Activated CD8-positive, alpha-beta T cell treated with anti-CD3 and anti-CD28 coated beads for 36 hours (primary cell): ENCODE measurements at regions of chr1 and their contacts with region 1.

Region 1: GRCh38 chr1:116737020-116737854 is 17.0 kb upstream of the CD2 start:
- DNase-seq: peak; percentile 86
- ATAC-seq: peak; percentile 60
- H3K4me3 Mint-ChIP-seq: peak overlapping the region; percentile 76
- H3K27ac Mint-ChIP-seq: peak overlapping the region; percentile 100
- H3K4me1 Mint-ChIP-seq: peaks cover 68% of the 10 kb centered on the region
- H3K27me3 Mint-ChIP-seq: no peaks in the 10 kb centered on the region
- CTCF ChIP-seq: peak; percentile 91

Region 2: DNA sequence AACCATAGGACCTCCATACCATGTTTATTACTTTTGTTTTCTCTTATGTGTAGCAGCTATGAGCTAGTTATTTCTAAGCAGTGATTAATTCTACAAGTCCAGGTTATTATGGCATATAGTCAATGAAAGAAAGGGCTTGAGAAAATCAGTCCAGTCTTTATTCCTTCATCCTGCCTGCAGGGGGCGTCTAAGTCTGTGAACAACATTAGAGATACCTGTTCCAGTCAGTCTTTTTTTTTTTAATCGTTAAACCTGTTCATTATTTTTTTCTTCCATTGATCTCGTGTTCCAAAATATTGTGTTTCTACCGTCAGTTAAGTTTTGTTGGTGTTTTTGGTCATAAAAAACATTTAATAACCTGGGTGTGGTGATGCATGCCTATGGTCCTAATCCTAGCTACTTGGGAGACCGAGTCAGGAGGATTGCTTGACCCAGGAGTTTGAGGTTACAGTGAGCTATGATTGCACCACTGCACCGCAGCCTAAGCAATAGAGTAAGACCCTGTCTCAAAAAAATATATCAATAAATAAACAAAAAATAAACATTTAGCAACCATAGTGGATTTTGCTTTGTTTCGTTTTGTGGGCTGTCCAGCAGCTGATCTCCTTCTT is 12.4 kb before region 1 on chr1:
- CTCF ChIA-PET with region 1: interaction called, 51 read pairs
- POLR2A ChIA-PET with region 1: interaction called, 11 read pairs
- intact Hi-C with region 1: no loop called
- DNase-seq: peak; percentile 92
- ATAC-seq: peak; percentile 84
- H3K4me3 Mint-ChIP-seq: no peak overlapping the region
- H3K27ac Mint-ChIP-seq: peak overlapping the region; percentile 28
- H3K4me1 Mint-ChIP-seq: peaks cover 34% of the 10 kb centered on the region
- H3K27me3 Mint-ChIP-seq: no peaks in the 10 kb centered on the region
- CTCF ChIP-seq: peak; percentile 90

Region 3: DNA sequence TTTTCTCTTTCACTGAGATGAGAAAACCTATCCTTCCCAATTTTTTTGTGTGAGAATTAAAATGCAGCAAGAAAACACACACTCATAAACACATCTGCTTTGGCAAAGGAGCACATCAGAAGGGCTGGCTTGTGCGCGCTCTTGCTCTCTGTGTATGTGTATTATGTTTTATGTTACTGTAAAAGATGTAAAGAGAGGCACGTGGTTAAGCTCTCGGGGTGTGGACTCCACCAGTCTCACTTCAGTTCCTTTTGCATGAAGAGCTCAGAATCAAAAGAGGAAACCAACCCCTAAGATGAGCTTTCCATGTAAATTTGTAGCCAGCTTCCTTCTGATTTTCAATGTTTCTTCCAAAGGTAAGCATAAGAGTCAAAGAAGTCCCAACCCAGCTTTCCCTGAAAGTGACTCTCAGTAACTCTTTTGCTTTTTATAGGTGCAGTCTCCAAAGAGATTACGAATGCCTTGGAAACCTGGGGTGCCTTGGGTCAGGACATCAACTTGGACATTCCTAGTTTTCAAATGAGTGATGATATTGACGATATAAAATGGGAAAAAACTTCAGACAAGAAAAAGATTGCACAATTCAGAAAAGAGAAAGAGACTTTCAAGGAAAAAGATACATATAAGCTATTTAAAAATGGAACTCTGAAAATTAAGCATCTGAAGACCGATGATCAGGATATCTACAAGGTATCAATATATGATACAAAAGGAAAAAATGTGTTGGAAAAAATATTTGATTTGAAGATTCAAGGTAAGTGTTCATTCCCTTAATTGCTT is 17.2 kb after region 1 on chr1 and contains the start of gene CD2:
- CTCF ChIA-PET with region 1: interaction called, 102 read pairs
- POLR2A ChIA-PET with region 1: interaction called, 850 read pairs
- intact Hi-C with region 1: loop called (anchors 1 kb)
- DNase-seq: peak; percentile 81
- ATAC-seq: peak; percentile 78
- H3K4me3 Mint-ChIP-seq: peak within 1 kb of the TSS; percentile 98
- H3K27ac Mint-ChIP-seq: peak within 1 kb of the TSS; percentile 99
- H3K4me1 Mint-ChIP-seq: peaks cover 23% of the 10 kb centered on the region
- H3K27me3 Mint-ChIP-seq: no peaks in the 10 kb centered on the region
- CTCF ChIP-seq: no peak
- total RNA-seq, gene CD2: 217 to 220 TPM

Region 4: GRCh38 chr1:116769561-116769977 is 32.3 kb after region 1 on chr1:
- CTCF ChIA-PET with region 1: interaction called, 114 read pairs
- POLR2A ChIA-PET with region 1: interaction called, 850 read pairs
- intact Hi-C with region 1: loop called (anchors 2 kb)
- DNase-seq: peak; percentile 89
- ATAC-seq: peak; percentile 56
- H3K4me3 Mint-ChIP-seq: peak overlapping the region; percentile 98
- H3K27ac Mint-ChIP-seq: peak overlapping the region; percentile 99
- H3K4me1 Mint-ChIP-seq: peaks cover 92% of the 10 kb centered on the region
- H3K27me3 Mint-ChIP-seq: no peaks in the 10 kb centered on the region
- CTCF ChIP-seq: no peak

Region 5: DNA sequence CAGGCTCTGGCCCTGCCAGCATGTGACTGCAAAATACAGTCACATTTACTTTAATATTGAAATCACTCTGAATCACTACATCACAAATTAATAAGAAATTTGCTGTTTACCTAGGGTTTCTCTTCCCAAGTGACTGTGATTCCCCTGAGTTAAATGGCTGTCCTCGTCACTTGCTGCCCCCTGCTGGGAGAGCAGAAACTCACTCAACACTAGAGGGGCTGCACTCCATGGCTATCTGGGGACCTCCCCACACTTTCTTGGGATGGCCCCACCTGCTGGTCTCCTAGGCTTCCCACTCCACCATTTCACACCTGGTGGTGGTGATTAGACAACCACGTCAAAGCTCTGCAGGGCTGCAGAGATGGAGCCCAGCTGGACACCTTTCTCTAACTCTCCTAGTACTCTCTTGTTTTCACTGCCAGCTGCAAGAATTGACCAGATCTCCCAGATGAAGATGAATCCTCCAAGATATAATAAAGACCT is 80.4 kb after region 1 on chr1:
- CTCF ChIA-PET with region 1: interaction called, 83 read pairs
- POLR2A ChIA-PET with region 1: interaction called, 64 read pairs
- intact Hi-C with region 1: loop called (anchors 1 kb)
- DNase-seq: peak; percentile 80
- ATAC-seq: peak; percentile 67
- H3K4me3 Mint-ChIP-seq: peak overlapping the region; percentile 52
- H3K27ac Mint-ChIP-seq: peak overlapping the region; percentile 96
- H3K4me1 Mint-ChIP-seq: peaks cover 52% of the 10 kb centered on the region
- H3K27me3 Mint-ChIP-seq: no peaks in the 10 kb centered on the region
- CTCF ChIP-seq: peak; percentile 95

Region 6: GRCh38 chr1:116881879-116882520 is 144.8 kb after region 1 on chr1:
- CTCF ChIA-PET with region 1: interaction called, 21 read pairs
- POLR2A ChIA-PET with region 1: no interaction called
- intact Hi-C with region 1: no loop called
- DNase-seq: peak; percentile 66
- ATAC-seq: peak; percentile 79
- H3K4me3 Mint-ChIP-seq: no peak overlapping the region
- H3K27ac Mint-ChIP-seq: no peak overlapping the region
- H3K4me1 Mint-ChIP-seq: peaks cover 11% of the 10 kb centered on the region
- H3K27me3 Mint-ChIP-seq: no peaks in the 10 kb centered on the region
- CTCF ChIP-seq: peak; percentile 39